B cell (primary cell): ENCODE measurements at regions of chr11 and their contacts with region 1.

Region 1: DNA sequence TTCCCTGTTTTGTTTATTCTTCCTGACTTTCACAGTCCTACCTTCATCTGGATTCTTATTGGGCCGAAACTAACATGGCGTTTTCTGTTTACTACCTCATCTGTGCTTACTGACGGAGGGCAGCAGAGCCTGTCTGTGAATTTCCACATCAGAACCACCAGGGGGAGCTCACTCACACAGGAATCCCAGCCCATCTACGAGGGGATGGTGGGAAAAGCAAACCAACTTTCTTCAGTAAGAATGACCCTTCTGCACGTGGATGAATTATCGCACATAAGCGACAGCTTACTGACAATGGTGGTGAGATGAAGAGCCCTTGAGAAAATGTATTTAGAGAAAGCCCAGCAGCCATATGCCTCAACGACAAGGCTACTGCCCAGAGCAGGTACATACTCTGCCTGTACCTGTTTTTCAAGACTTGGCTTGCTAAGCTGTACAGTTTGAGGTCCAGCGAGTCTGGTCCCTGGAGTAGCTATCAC is 42.5 kb downstream of the LARGE2 start:
- DNase-seq: peak; percentile 82
- ATAC-seq: peak; percentile 95
- H3K4me3 ChIP-seq: no peak overlapping the region
- H3K4me3 Mint-ChIP-seq: no peak overlapping the region
- H3K27ac ChIP-seq: peak overlapping the region in 1 of 2 donors; percentile 71
- H3K27ac Mint-ChIP-seq: no peak overlapping the region
- H3K4me1 ChIP-seq: peaks cover 5 to 6% of the 10 kb centered on the region in 2 donors
- H3K4me1 Mint-ChIP-seq: no peaks in the 10 kb centered on the region
- H3K27me3 ChIP-seq: no peaks in the 10 kb centered on the region
- H3K27me3 Mint-ChIP-seq: no peaks in the 10 kb centered on the region
- CTCF ChIP-seq: peak; percentile 95

Region 2: GRCh38 chr11:45899448-45900173 is 65.3 kb before region 1 on chr11:
- CTCF ChIA-PET with region 1: interaction called, 12 read pairs
- POLR2A ChIA-PET with region 1: no interaction called
- intact Hi-C with region 1: no loop called
- DNase-seq: peak; percentile 89
- ATAC-seq: peak; percentile 82
- H3K4me3 ChIP-seq: peak overlapping the region in 4 of 5 experiments; percentile 37 to 59 (median 50)
- H3K4me3 Mint-ChIP-seq: peak overlapping the region; percentile 81
- H3K27ac ChIP-seq: peak overlapping the region in 1 of 2 donors; percentile 43
- H3K27ac Mint-ChIP-seq: peak overlapping the region; percentile 37
- H3K4me1 ChIP-seq: peaks cover 12 to 17% of the 10 kb centered on the region in 2 donors
- H3K4me1 Mint-ChIP-seq: peaks cover 12% of the 10 kb centered on the region
- H3K27me3 ChIP-seq: peaks cover 0 to 43% (median 21%) of the 10 kb centered on the region in 4 experiments
- H3K27me3 Mint-ChIP-seq: peaks cover 23% of the 10 kb centered on the region
- CTCF ChIP-seq: no peak

Region 3: GRCh38 chr11:45930031-45930794 is 34.7 kb before region 1 on chr11:
- CTCF ChIA-PET with region 1: interaction called, 50 read pairs
- POLR2A ChIA-PET with region 1: interaction called, 4 read pairs
- intact Hi-C with region 1: loop called (anchors 2 kb)
- DNase-seq: peak; percentile 94
- ATAC-seq: peak; percentile 77
- H3K4me3 ChIP-seq: peak overlapping the region; percentile 26 to 95 (median 79)
- H3K4me3 Mint-ChIP-seq: peak overlapping the region; percentile 95
- H3K27ac ChIP-seq: peak overlapping the region; percentile 92 to 93
- H3K27ac Mint-ChIP-seq: peak overlapping the region; percentile 92
- H3K4me1 ChIP-seq: peaks cover 65 to 84% of the 10 kb centered on the region in 2 donors
- H3K4me1 Mint-ChIP-seq: peaks cover 93% of the 10 kb centered on the region
- H3K27me3 ChIP-seq: no peaks in the 10 kb centered on the region
- H3K27me3 Mint-ChIP-seq: no peaks in the 10 kb centered on the region
- CTCF ChIP-seq: no peak

Region 4: DNA sequence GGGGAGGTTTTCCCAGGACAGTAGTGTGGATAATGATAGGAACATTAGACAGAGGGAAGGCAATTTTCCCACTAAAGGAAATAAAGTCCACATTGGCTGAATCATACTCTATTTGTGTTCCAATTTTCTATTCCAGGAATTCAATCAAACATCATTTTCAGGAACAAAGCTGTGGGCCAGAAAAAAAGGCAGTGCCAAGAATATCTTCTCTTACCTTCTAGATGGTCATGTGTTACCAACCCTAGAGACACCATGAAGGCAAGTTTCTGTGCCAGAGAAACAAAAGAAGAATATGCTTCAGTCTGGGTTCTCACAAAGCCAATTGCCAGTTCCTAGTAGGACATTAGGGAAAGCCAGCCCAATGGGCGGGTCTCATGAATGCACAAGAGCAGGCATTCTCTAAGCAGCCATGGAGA is 14.9 kb before region 1 on chr11:
- CTCF ChIA-PET with region 1: interaction called, 43 read pairs
- POLR2A ChIA-PET with region 1: no interaction called
- intact Hi-C with region 1: no loop called
- DNase-seq: no peak
- ATAC-seq: no peak
- H3K4me3 ChIP-seq: no peak overlapping the region
- H3K4me3 Mint-ChIP-seq: no peak overlapping the region
- H3K27ac ChIP-seq: no peak overlapping the region
- H3K27ac Mint-ChIP-seq: no peak overlapping the region
- H3K4me1 ChIP-seq: no peaks in the 10 kb centered on the region
- H3K4me1 Mint-ChIP-seq: no peaks in the 10 kb centered on the region
- H3K27me3 ChIP-seq: no peaks in the 10 kb centered on the region
- H3K27me3 Mint-ChIP-seq: no peaks in the 10 kb centered on the region
- CTCF ChIP-seq: no peak

Region 5: DNA sequence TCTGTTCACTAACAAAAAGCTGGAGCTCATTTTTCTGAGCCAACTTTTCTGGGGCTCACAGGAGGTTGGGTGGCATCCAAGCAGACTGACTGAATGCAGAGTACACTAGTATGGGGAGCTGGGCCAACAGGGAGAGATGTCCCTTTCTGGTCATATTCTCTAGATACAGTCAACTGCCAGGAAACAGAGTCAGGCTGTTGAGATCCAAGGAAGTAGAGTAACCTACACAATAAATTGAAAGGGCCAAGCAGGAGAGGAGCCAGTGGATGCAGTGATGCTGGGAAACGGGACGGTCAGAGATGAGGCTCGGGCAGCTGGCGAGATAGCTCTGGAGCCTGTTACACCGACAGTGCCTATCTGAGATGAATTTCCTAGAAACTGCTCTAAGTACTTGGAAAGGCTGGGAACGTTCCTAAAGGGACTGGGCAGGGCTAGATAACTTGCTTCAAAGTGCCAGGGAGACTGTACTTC is 28.6 kb after region 1 on chr11:
- CTCF ChIA-PET with region 1: interaction called, 18 read pairs
- POLR2A ChIA-PET with region 1: no interaction called
- intact Hi-C with region 1: no loop called
- DNase-seq: no peak
- ATAC-seq: no peak
- H3K4me3 ChIP-seq: no peak overlapping the region
- H3K4me3 Mint-ChIP-seq: no peak overlapping the region
- H3K27ac ChIP-seq: no peak overlapping the region
- H3K27ac Mint-ChIP-seq: no peak overlapping the region
- H3K4me1 ChIP-seq: peaks cover 0 to 11% of the 10 kb centered on the region in 2 donors
- H3K4me1 Mint-ChIP-seq: peaks cover 21% of the 10 kb centered on the region
- H3K27me3 ChIP-seq: no peaks in the 10 kb centered on the region
- H3K27me3 Mint-ChIP-seq: no peaks in the 10 kb centered on the region
- CTCF ChIP-seq: no peak

Region 6: GRCh38 chr11:46006418-46007070 is 41.6 kb after region 1 on chr11:
- CTCF ChIA-PET with region 1: interaction called, 42 read pairs
- POLR2A ChIA-PET with region 1: no interaction called
- intact Hi-C with region 1: loop called (anchors 1 kb)
- DNase-seq: peak; percentile 79
- ATAC-seq: peak; percentile 82
- H3K4me3 ChIP-seq: no peak overlapping the region
- H3K4me3 Mint-ChIP-seq: no peak overlapping the region
- H3K27ac ChIP-seq: no peak overlapping the region
- H3K27ac Mint-ChIP-seq: no peak overlapping the region
- H3K4me1 ChIP-seq: no peaks in the 10 kb centered on the region
- H3K4me1 Mint-ChIP-seq: peaks cover 1% of the 10 kb centered on the region
- H3K27me3 ChIP-seq: no peaks in the 10 kb centered on the region
- H3K27me3 Mint-ChIP-seq: no peaks in the 10 kb centered on the region
- CTCF ChIP-seq: peak; percentile 84